ENCODE measurements at regions of chr10 and their contacts with region 1.

Region 1: GRCh38 chr10:73848821-73849489 is 25.4 kb downstream of the CAMK2G start:
- DNase-seq: peak; percentile 85
- H3K4me3 ChIP-seq: peak overlapping the region; percentile 19
- H3K27ac ChIP-seq: peak overlapping the region; percentile 72
- H3K4me1 ChIP-seq: peaks cover 34% of the 10 kb centered on the region
- H3K27me3 ChIP-seq: no peaks in the 10 kb centered on the region
- CTCF ChIP-seq: peak; percentile 100

Region 2: GRCh38 chr10:72976886-72977285 is 872.1 kb before region 1 on chr10:
- intact Hi-C with region 1: no loop called
- DNase-seq: no peak
- H3K4me3 ChIP-seq: no peak overlapping the region
- H3K27ac ChIP-seq: no peak overlapping the region
- H3K4me1 ChIP-seq: no peaks in the 10 kb centered on the region
- H3K27me3 ChIP-seq: no peaks in the 10 kb centered on the region
- CTCF ChIP-seq: no peak

Region 3: DNA sequence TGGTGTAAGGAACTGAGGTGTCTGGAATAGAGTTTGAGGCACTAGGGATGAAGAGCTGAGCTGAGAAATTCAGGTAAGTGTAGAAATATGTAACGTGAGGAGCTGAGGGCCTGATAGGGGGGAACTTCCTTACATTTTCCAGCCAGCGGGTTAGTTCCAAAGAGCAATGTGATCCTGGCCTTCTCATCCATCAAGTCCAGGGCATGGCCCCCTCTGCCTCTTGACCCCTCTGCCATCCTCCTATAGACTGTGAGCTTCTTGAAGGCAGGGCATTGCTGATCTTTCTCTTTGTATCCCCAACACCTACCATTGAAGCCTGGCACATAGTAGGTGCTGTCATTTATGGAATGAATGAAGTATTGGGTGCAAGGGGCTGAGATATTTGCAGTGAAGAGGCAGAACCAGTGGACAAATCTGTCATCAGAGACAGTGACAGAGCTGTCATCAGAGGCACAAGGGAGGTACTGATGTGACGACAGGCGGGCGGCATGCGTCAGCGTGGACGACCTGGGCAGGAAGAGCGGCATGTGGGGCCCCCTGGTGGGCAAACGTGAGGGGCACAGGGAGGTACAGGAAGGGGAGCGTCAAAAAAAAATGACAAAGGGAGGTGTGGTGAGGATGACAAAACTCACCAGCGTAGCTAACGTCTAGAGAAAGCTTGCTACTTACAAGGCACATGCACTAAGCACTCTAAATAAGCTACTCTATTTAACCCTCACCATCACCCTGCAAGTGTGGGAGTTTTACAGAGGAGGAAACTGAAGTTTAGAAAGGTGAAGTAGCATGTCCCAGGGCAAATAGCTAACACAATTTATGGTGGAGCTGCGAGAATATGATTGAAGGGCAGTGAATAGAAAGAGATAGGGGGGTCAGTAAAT is 30.6 kb after region 1 on chr10:
- intact Hi-C with region 1: loop called (anchors 5 kb)
- DNase-seq: peak; percentile 84
- H3K4me3 ChIP-seq: no peak overlapping the region
- H3K27ac ChIP-seq: no peak overlapping the region
- H3K4me1 ChIP-seq: peaks cover 22% of the 10 kb centered on the region
- H3K27me3 ChIP-seq: peaks cover 23% of the 10 kb centered on the region
- CTCF ChIP-seq: peak; percentile 93

Measured in left ventricle myocardium inferior (tissue), 1 donor.